PC-9 (cell line): ENCODE measurements at regions of chr1 and their contacts with region 1.

Region 1: GRCh38 chr1:56578963-56579875 is at the start of gene PLPP3:
- DNase-seq: peak; percentile 81 to 86
- H3K4me3 ChIP-seq: peak within 1 kb of the TSS; percentile 87
- H3K27ac ChIP-seq: peak within 1 kb of the TSS; percentile 57
- H3K4me1 ChIP-seq: peaks cover 40% of the 10 kb centered on the region
- H3K27me3 ChIP-seq: no peaks in the 10 kb centered on the region
- CTCF ChIP-seq: peak; percentile 65
- total RNA-seq, gene PLPP3: 16.5 and 22.4 TPM in 2 replicates

Region 2: GRCh38 chr1:55478742-55479141 is 1100.5 kb before region 1 on chr1:
- CTCF ChIA-PET with region 1: interaction called, 3 read pairs
- POLR2A ChIA-PET with region 1: no interaction called
- intact Hi-C with region 1: loop called (anchors 5 kb)
- DNase-seq: no peak
- H3K4me3 ChIP-seq: no peak overlapping the region
- H3K27ac ChIP-seq: no peak overlapping the region
- H3K4me1 ChIP-seq: peaks cover 11% of the 10 kb centered on the region
- H3K27me3 ChIP-seq: no peaks in the 10 kb centered on the region
- CTCF ChIP-seq: peak; percentile 54

Region 3: DNA sequence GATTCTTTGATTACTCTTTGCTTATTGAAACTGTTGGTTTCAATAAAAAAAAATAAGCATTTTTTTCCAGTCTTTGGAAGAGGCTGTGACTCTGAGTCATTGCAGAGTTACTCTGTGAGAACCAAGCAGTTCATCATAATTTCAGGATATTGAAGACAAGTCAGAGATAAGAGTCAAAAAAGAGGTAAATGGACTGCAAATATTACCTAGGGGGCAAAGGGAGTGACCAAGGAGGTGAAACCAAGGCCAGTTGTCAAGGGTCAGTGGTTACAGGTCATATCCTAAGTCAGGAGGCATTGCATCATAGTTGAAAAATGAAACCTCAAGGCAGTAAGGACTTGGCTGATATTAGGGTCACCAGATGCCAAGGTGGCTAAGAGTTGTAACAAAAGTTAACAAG is 766.9 kb before region 1 on chr1:
- CTCF ChIA-PET with region 1: no interaction called
- POLR2A ChIA-PET with region 1: interaction called, 10 read pairs
- intact Hi-C with region 1: no loop called
- DNase-seq: peak; percentile 30 to 84
- H3K4me3 ChIP-seq: no peak overlapping the region
- H3K27ac ChIP-seq: peak overlapping the region; percentile 83
- H3K4me1 ChIP-seq: peaks cover 40% of the 10 kb centered on the region
- H3K27me3 ChIP-seq: no peaks in the 10 kb centered on the region
- CTCF ChIP-seq: no peak

Region 4: DNA sequence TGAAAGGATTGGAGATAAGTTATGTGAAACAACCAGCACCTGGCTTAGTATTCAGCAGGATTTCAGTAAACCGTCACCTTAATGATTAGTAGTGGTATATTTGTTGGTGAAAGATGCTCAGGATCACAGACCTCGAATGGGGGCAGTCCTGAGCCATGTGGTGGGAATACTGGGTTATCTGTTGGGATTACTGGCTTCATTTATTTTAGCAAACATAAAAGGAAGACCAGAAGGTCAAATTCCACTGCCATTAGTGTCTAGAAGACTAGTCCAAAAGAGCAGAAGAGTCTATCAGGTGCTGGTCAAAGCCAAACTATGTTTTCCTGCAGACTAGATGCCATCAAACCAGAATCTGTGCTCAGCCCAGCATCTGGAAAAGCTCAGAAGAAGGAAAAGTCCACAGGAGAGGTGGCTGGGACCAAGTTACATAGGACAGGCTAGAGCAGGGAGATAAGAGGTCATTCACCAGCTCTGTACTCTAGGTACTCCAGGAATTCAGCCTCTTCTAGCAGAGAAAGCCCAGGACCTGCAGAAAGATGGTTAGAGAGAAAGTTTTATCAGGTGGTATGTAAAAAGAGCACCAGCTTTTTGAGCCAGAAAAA is 343.2 kb before region 1 on chr1:
- CTCF ChIA-PET with region 1: no interaction called
- POLR2A ChIA-PET with region 1: interaction called, 7 read pairs
- intact Hi-C with region 1: loop called (anchors 5 kb)
- DNase-seq: no peak
- H3K4me3 ChIP-seq: no peak overlapping the region
- H3K27ac ChIP-seq: no peak overlapping the region
- H3K4me1 ChIP-seq: no peaks in the 10 kb centered on the region
- H3K27me3 ChIP-seq: no peaks in the 10 kb centered on the region
- CTCF ChIP-seq: no peak

Region 5: GRCh38 chr1:56330391-56331026 is 248.7 kb before region 1 on chr1:
- CTCF ChIA-PET with region 1: no interaction called
- POLR2A ChIA-PET with region 1: no interaction called
- intact Hi-C with region 1: loop called (anchors 2 kb)
- DNase-seq: peak in 1 of 2 experiments; percentile 46
- H3K4me3 ChIP-seq: no peak overlapping the region
- H3K27ac ChIP-seq: peak overlapping the region; percentile 55
- H3K4me1 ChIP-seq: peaks cover 46% of the 10 kb centered on the region
- H3K27me3 ChIP-seq: no peaks in the 10 kb centered on the region
- CTCF ChIP-seq: no peak

Region 6: DNA sequence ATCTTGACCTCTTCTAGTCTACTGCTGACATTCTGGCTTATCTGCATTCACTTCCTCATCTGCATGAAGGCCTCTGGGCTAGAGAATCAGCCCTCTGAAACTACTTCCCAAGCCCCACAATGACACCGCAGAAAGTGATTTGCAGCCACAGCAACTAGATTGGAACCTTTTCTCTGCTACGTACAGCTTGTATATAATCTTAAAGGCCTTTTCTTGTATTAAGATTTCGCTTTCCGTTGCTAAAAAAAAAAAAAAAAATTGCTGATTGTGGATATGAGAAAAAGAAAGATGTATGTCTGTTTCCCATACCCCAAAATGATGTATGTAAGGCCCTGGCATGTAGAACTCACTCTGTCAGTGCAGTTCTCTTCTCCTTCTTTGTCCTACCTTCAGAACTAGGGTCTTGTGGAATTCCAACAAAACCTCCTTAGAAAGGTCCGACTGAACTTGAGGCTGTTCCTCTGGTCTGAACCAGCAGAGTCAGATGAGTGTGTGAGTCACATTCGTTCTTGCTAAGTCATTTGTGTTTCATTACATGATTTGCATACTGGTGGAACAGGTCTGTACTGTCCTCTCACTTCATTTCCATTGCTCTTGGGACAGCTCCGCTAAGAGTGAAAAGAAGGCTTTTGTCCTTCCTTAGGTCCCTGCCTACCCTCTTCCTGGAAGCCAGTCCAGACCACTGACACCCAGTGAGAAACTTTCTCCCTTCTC is 62.5 kb before region 1 on chr1:
- CTCF ChIA-PET with region 1: no interaction called
- POLR2A ChIA-PET with region 1: no interaction called
- intact Hi-C with region 1: loop called (anchors 1 kb)
- DNase-seq: peak; percentile 59 to 96
- H3K4me3 ChIP-seq: peak overlapping the region; percentile 60
- H3K27ac ChIP-seq: peak overlapping the region; percentile 99
- H3K4me1 ChIP-seq: peaks cover 41% of the 10 kb centered on the region
- H3K27me3 ChIP-seq: no peaks in the 10 kb centered on the region
- CTCF ChIP-seq: no peak